CD8-positive, alpha-beta T cell (primary cell): ENCODE measurements at regions of chr16 and their contacts with region 1.

Region 1: DNA sequence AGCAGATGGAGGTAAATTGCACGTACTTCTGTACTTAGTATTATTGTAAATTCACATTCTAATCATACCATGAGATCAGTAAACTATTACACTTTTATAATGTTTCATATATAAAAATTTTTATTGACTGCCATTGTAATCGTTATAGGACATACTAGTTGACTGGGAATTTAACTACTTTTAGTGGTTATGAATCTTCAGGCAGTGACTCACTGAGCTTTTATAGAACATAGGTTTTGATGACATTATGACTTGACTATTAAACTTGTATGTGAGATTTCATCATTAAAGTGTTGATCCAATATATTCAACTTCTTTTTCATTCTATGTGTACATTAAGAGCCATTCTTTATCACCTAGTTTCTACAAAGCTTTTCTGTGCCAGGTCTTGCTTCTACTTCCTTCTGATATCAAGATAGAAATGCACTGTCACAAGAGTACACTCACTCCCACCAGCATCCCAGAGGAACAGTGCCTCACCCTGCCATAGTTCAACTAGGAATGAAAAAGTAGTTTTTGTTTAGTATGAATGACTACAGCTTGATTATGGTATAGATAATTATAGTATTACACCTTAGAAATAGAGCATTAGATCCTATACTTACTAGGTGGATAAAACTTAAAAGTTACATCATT is 142.4 kb upstream of the RBL2 start:
- DNase-seq: no peak
- ATAC-seq: no peak
- H3K4me3 ChIP-seq: no peak overlapping the region
- H3K4me3 Mint-ChIP-seq: no peak overlapping the region
- H3K27ac ChIP-seq: no peak overlapping the region
- H3K27ac Mint-ChIP-seq: no peak overlapping the region
- H3K4me1 ChIP-seq: no peaks in the 10 kb centered on the region
- H3K4me1 Mint-ChIP-seq: no peaks in the 10 kb centered on the region
- H3K27me3 ChIP-seq: no peaks in the 10 kb centered on the region
- H3K27me3 Mint-ChIP-seq: no peaks in the 10 kb centered on the region
- CTCF ChIP-seq: no peak

Region 2: DNA sequence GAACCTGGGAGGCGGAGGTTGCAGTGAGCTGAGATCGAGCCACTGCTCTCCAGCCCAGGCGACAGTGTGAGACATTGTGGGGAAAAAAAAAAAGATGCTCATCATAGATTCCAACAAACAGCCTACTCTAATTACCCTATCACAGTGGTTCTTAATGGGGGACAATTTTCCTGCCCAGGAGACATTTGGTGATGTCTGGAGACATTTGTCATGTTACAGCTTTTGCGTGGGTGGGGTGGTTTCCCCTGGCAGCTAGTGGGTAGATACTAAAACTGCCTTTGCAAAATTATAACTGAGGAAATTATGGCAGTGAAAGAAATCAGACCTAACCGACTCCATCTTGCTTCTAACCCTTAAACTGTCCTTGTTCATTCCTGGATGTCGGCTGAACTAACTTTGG is 49.9 kb after region 1 on chr16:
- CTCF ChIA-PET with region 1: no interaction called
- POLR2A ChIA-PET with region 1: no interaction called
- intact Hi-C with region 1: loop called in 1 of 2 experiments (anchors 5 kb)
- DNase-seq: no peak
- ATAC-seq: no peak
- H3K4me3 ChIP-seq: no peak overlapping the region
- H3K4me3 Mint-ChIP-seq: no peak overlapping the region
- H3K27ac ChIP-seq: no peak overlapping the region
- H3K27ac Mint-ChIP-seq: no peak overlapping the region
- H3K4me1 ChIP-seq: no peaks in the 10 kb centered on the region
- H3K4me1 Mint-ChIP-seq: peaks cover 5% of the 10 kb centered on the region
- H3K27me3 ChIP-seq: no peaks in the 10 kb centered on the region
- H3K27me3 Mint-ChIP-seq: no peaks in the 10 kb centered on the region
- CTCF ChIP-seq: no peak